CD4-positive, alpha-beta T cell (primary cell): ENCODE measurements at regions of chr11 and their contacts with region 1.

Region 1: DNA sequence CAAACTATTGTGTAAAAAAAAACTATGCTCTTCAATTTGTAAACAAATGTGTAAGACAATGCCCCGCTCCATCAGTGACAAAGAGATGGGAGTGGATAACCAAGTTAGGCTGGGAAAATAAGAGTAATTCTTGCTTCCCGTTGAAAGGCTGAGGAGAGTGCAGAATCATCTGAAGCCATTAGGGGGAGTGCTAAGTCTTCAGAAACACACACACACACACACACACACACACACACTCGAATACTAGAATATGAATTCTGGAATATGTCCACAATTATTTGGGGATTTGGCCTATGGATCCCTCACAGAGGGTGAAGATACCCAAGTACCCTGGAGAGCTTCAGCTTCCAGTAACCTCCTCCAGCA is 27.8 kb upstream of the ROBO3 start:
- DNase-seq: peak in 3 of 14 experiments; percentile 16 to 41 (median 35)
- ATAC-seq: peak; percentile 45
- H3K4me3 ChIP-seq: no peak overlapping the region
- H3K4me3 Mint-ChIP-seq: peak overlapping the region; percentile 74
- H3K27ac ChIP-seq: no peak overlapping the region
- H3K27ac Mint-ChIP-seq: no peak overlapping the region
- H3K4me1 ChIP-seq: peaks cover 19% of the 10 kb centered on the region
- H3K4me1 Mint-ChIP-seq: peaks cover 21% of the 10 kb centered on the region
- H3K27me3 ChIP-seq: peaks cover 51 to 56% of the 10 kb centered on the region in 2 experiments
- H3K27me3 Mint-ChIP-seq: peaks cover 83% of the 10 kb centered on the region
- CTCF ChIP-seq: no peak

Region 2: GRCh38 chr11:124644426-124645280 is 192.8 kb before region 1 on chr11:
- CTCF ChIA-PET with region 1: interaction called, 3 read pairs
- POLR2A ChIA-PET with region 1: no interaction called
- intact Hi-C with region 1: loop called (anchors 1 kb)
- DNase-seq: peak in 8 of 14 experiments; percentile 2 to 71 (median 28)
- ATAC-seq: peak; percentile 77
- H3K4me3 ChIP-seq: no peak overlapping the region
- H3K4me3 Mint-ChIP-seq: no peak overlapping the region
- H3K27ac ChIP-seq: no peak overlapping the region
- H3K27ac Mint-ChIP-seq: no peak overlapping the region
- H3K4me1 ChIP-seq: peaks cover 3% of the 10 kb centered on the region
- H3K4me1 Mint-ChIP-seq: no peaks in the 10 kb centered on the region
- H3K27me3 ChIP-seq: no peaks in the 10 kb centered on the region
- H3K27me3 Mint-ChIP-seq: no peaks in the 10 kb centered on the region
- CTCF ChIP-seq: peak; percentile 95

Region 3: DNA sequence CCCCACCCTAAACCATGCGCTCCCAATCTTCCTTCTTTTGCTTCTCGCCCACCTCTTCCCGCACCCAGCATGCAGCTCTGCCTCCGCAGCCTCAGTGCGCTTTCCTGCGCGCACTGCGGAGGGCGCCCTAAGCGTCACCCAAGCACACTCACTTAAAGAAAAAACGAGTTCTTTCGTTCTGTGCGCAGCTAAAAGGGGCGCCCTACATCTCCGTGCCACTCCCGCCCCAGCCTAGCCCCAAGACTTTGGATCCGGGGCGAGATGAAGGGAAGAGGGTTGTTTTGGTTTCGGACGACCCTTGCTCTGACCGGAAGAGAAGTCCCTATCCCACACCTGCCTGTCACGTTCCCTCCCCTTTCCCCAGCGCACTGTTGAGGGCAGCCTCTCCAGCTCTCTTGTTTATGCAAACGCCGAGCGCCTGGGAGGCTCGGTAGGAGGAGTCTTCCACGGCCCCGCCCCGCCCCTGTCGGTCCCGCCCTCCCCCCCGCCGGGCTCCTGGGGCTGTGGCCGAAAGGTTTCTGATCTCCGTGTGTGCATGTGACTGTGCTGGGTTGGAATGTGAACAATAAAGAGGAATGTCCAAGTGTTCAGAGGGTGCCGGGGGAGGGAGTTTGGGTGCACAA is 90.7 kb before region 1 on chr11:
- CTCF ChIA-PET with region 1: interaction called, 7 read pairs
- POLR2A ChIA-PET with region 1: interaction called, 4 read pairs
- intact Hi-C with region 1: loop called in 1 of 2 experiments (anchors 5 kb)
- DNase-seq: peak; percentile 71 to 90 (median 76)
- ATAC-seq: peak; percentile 90
- H3K4me3 ChIP-seq: peak overlapping the region; percentile 95
- H3K4me3 Mint-ChIP-seq: peak overlapping the region; percentile 94
- H3K27ac ChIP-seq: peak overlapping the region; percentile 72 to 75
- H3K27ac Mint-ChIP-seq: peak overlapping the region; percentile 82
- H3K4me1 ChIP-seq: peaks cover 32% of the 10 kb centered on the region
- H3K4me1 Mint-ChIP-seq: peaks cover 5% of the 10 kb centered on the region
- H3K27me3 ChIP-seq: peaks cover 0 to 1% of the 10 kb centered on the region in 2 experiments
- H3K27me3 Mint-ChIP-seq: no peaks in the 10 kb centered on the region
- CTCF ChIP-seq: peak; percentile 67

Region 4: GRCh38 chr11:124793466-124794278 is 43.8 kb before region 1 on chr11:
- CTCF ChIA-PET with region 1: interaction called, 3 read pairs
- POLR2A ChIA-PET with region 1: no interaction called
- intact Hi-C with region 1: loop called in 1 of 2 experiments (anchors 2 kb)
- DNase-seq: peak in 4 of 14 experiments; percentile 35 to 71 (median 62)
- ATAC-seq: no peak
- H3K4me3 ChIP-seq: no peak overlapping the region
- H3K4me3 Mint-ChIP-seq: no peak overlapping the region
- H3K27ac ChIP-seq: no peak overlapping the region
- H3K27ac Mint-ChIP-seq: no peak overlapping the region
- H3K4me1 ChIP-seq: peaks cover 3% of the 10 kb centered on the region
- H3K4me1 Mint-ChIP-seq: peaks cover 46% of the 10 kb centered on the region
- H3K27me3 ChIP-seq: no peaks in the 10 kb centered on the region
- H3K27me3 Mint-ChIP-seq: no peaks in the 10 kb centered on the region
- CTCF ChIP-seq: peak; percentile 84

Region 5: DNA sequence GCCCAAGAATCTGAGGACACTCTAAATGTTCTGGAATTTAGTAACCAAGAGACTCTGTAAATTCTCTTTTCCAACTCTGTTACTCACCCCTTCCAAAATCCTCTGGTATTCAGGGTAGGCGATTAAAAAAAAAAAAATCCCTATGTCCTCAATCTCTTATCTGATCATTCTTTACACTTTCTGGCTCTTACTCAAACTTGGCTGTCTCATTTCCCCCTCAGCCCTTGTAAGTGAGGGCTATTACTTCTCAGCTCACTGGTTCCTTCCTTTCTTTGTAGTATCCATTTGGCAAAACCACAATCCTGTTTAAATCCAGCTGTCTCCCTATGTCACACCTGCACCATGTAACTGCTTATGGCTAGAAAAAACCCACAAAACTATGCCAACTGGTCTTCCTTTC is 24.6 kb before region 1 on chr11:
- CTCF ChIA-PET with region 1: no interaction called
- POLR2A ChIA-PET with region 1: no interaction called
- intact Hi-C with region 1: no loop called
- DNase-seq: no peak
- ATAC-seq: no peak
- H3K4me3 ChIP-seq: no peak overlapping the region
- H3K4me3 Mint-ChIP-seq: no peak overlapping the region
- H3K27ac ChIP-seq: no peak overlapping the region
- H3K27ac Mint-ChIP-seq: no peak overlapping the region
- H3K4me1 ChIP-seq: no peaks in the 10 kb centered on the region
- H3K4me1 Mint-ChIP-seq: no peaks in the 10 kb centered on the region
- H3K27me3 ChIP-seq: peaks cover 16 to 21% of the 10 kb centered on the region in 2 experiments
- H3K27me3 Mint-ChIP-seq: peaks cover 53% of the 10 kb centered on the region
- CTCF ChIP-seq: no peak

Region 6: GRCh38 chr11:124855437-124855836 is 18.0 kb after region 1 on chr11:
- CTCF ChIA-PET with region 1: interaction called, 5 read pairs
- POLR2A ChIA-PET with region 1: no interaction called
- intact Hi-C with region 1: loop called in 1 of 2 experiments (anchors 1 kb)
- DNase-seq: no peak
- ATAC-seq: no peak
- H3K4me3 ChIP-seq: no peak overlapping the region
- H3K4me3 Mint-ChIP-seq: no peak overlapping the region
- H3K27ac ChIP-seq: no peak overlapping the region
- H3K27ac Mint-ChIP-seq: no peak overlapping the region
- H3K4me1 ChIP-seq: no peaks in the 10 kb centered on the region
- H3K4me1 Mint-ChIP-seq: no peaks in the 10 kb centered on the region
- H3K27me3 ChIP-seq: peaks cover 25 to 26% of the 10 kb centered on the region in 2 experiments
- H3K27me3 Mint-ChIP-seq: peaks cover 23% of the 10 kb centered on the region
- CTCF ChIP-seq: no peak

Region 7: GRCh38 chr11:124875943-124876817 is 38.7 kb after region 1 on chr11:
- CTCF ChIA-PET with region 1: interaction called, 3 read pairs
- POLR2A ChIA-PET with region 1: interaction called, 3 read pairs
- intact Hi-C with region 1: loop called (anchors 2 to 5 kb)
- DNase-seq: peak; percentile 54 to 89 (median 71)
- ATAC-seq: peak; percentile 96
- H3K4me3 ChIP-seq: peak overlapping the region; percentile 83
- H3K4me3 Mint-ChIP-seq: peak overlapping the region; percentile 94
- H3K27ac ChIP-seq: peak overlapping the region; percentile 62 to 76
- H3K27ac Mint-ChIP-seq: peak overlapping the region; percentile 87
- H3K4me1 ChIP-seq: peaks cover 23% of the 10 kb centered on the region
- H3K4me1 Mint-ChIP-seq: peaks cover 25% of the 10 kb centered on the region
- H3K27me3 ChIP-seq: peaks cover 10 to 40% of the 10 kb centered on the region in 2 experiments
- H3K27me3 Mint-ChIP-seq: peaks cover 42% of the 10 kb centered on the region
- CTCF ChIP-seq: peak; percentile 80